Thyroid gland (tissue), 4 donors: ENCODE measurements at regions of chr6 and their contacts with region 1.

Region 1: DNA sequence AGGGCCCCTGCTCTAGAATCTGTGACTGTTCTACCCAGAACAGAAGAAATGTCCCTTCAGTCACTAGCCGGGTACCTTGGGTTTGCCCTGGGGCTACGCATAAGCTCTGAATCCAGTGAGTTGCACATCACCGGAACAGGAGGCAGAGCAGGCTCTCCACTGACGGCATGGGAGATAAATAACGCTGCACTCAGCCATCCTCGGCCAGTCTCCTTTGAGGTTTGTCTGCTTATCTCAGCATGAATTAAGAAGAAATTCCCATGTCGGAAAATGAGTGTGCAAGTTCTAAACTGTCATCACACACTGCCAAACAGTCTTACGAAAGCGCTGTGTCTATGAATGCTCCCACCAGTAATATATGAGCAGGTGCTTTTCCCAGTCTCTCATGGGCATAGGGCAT is 90.8 kb downstream of the FAM50B start:
- DNase-seq: no peak
- H3K4me3 ChIP-seq: no peak overlapping the region
- H3K27ac ChIP-seq: no peak overlapping the region
- H3K4me1 ChIP-seq: no peaks in the 10 kb centered on the region
- H3K27me3 ChIP-seq: no peaks in the 10 kb centered on the region
- CTCF ChIP-seq: no peak
- POLR2A ChIP-seq: no peak

Region 2: DNA sequence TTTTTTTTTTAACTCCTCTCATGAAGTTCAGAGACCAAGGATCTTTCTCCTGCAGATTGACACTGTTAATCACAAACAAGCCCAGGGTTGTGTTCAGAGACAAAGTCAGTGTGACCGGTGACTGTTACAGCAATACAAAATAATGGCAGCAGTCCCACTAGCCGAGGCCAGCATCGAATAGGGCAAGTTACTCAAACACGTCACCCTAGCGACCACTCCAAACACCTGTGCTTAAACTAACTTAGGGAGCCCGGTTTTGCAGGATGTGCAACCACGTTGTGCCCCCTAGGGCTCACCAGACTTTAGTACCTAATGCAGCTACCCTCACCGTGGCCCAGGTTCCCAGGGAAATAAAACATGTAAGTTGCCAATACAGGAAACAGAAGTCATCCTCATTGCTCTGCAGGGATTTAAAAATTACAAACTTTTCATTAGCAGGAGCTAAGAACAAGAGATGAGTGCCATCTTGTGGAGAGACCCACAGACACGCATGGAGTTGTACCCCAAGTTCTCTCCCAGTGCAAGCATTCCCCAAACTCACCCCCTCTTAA is 52.7 kb before region 1 on chr6:
- intact Hi-C with region 1: loop called (anchors 10 kb)
- DNase-seq: peak; percentile 59 to 69
- H3K4me3 ChIP-seq: no peak overlapping the region
- H3K27ac ChIP-seq: peak overlapping the region in 1 of 3 donors; percentile 62
- H3K4me1 ChIP-seq: peaks cover 15 to 28% of the 10 kb centered on the region in 2 donors
- H3K27me3 ChIP-seq: no peaks in the 10 kb centered on the region
- CTCF ChIP-seq: peak in 4 of 6 experiments; percentile 39 to 56 (median 48)
- POLR2A ChIP-seq: peak in 1 of 2 donors; percentile 12

Region 3: GRCh38 chr6:3990692-3991501 is 50.9 kb after region 1 on chr6:
- intact Hi-C with region 1: loop called (anchors 10 kb)
- DNase-seq: peak; percentile 92 to 93
- H3K4me3 ChIP-seq: peak overlapping the region in 2 of 3 donors; percentile 31 to 34
- H3K27ac ChIP-seq: peak overlapping the region; percentile 84 to 91 (median 90)
- H3K4me1 ChIP-seq: peaks cover 15 to 33% of the 10 kb centered on the region in 2 donors
- H3K27me3 ChIP-seq: no peaks in the 10 kb centered on the region
- CTCF ChIP-seq: peak; percentile 58 to 95 (median 90)
- POLR2A ChIP-seq: peak in 1 of 2 donors; percentile 47

Region 4: GRCh38 chr6:4169028-4169789 is 229.2 kb after region 1 on chr6:
- intact Hi-C with region 1: no loop called
- DNase-seq: no peak
- H3K4me3 ChIP-seq: no peak overlapping the region
- H3K27ac ChIP-seq: no peak overlapping the region
- H3K4me1 ChIP-seq: no peaks in the 10 kb centered on the region
- H3K27me3 ChIP-seq: no peaks in the 10 kb centered on the region
- CTCF ChIP-seq: no peak
- POLR2A ChIP-seq: no peak

Region 5: DNA sequence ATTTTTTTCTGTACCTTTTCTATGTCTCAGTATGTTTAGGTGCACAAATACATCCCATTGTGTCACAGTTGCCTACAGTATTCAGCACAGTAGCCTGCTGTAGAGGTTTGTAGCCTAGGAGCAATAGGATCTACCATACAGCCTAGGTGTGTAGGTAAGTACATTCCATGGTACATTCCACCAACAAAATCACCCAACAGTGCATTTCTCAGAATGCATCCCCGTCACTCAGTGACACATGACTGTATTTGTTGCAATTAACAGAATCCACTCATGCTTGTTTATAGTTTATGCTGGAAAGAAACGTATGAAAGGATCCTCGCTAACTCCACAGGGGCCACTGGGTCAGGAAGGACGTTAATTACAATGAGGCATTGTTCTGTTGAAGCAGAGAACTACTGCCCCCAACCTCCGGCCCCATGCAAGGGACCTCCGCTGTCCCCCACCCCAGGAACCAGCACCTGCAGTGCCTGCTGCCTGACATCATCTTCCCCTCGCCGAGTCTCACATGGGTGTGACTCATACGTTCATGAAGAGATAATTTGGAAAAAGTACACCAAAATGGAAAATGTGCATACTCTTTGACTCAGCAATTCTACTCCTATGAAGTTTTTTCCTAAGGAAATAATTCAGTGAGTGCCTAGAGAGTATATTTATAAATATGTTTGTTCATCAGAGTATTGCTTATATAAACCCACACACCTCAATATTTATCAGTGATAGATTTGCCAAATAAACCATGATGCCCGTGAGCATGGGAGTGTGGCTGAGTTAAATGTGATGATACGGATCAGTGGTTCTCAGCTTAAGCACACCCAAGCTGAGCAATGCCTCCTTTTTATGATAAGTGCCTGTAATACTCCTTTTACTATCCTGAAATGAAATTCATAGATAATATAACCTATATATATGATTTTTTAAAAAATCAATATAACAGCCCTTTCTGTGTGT is 351.8 kb after region 1 on chr6:
- intact Hi-C with region 1: no loop called
- DNase-seq: peak in 1 of 2 donors; percentile 8
- H3K4me3 ChIP-seq: no peak overlapping the region
- H3K27ac ChIP-seq: no peak overlapping the region
- H3K4me1 ChIP-seq: peaks cover 4 to 7% of the 10 kb centered on the region in 2 donors
- H3K27me3 ChIP-seq: no peaks in the 10 kb centered on the region
- CTCF ChIP-seq: no peak
- POLR2A ChIP-seq: no peak